H1 (cell line): ENCODE measurements at regions of chr17 and their contacts with region 1.

Region 1: GRCh38 chr17:78840725-78841611 is at the start of gene USP36:
- DNase-seq: peak; percentile 96 to 100
- H3K4me3 ChIP-seq: peak within 1 kb of the TSS; percentile 68 to 93 (median 86)
- H3K27ac ChIP-seq: peak within 1 kb of the TSS; percentile 85
- H3K4me1 ChIP-seq: peaks cover 2 to 12% (median 5%) of the 10 kb centered on the region in 4 experiments
- H3K27me3 ChIP-seq: no peaks in the 10 kb centered on the region
- CTCF ChIP-seq: peak in 2 of 3 experiments; percentile 11; a peak in 2 of 4 replicates
- EP300 ChIP-seq: peak; percentile 11 to 79; a peak in 2 of 3 replicates
- POLR2A ChIP-seq: peak; percentile 83 to 86
- RAD21 ChIP-seq: no peak
- total RNA-seq, gene USP36: 65.8 and 67.7 TPM in 2 replicates

Region 2: DNA sequence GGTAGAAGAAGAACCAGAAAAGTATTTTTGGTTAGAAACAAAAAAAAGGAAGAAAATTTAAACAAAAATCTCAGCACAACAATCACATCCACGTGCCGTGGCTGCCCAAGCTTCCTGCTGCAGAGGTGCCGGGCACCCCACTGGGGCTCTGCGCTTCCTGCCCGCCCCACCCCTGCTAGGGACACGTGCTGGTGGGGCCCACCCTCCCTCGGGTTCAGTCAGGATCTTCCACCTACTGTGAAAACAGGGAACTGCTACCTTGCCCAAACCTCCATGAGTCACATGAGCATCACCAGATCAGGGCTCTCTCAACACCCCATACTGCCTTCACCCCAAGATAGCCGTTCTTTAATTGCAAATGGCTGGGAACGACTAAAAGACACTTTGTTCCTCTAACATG is 34.5 kb before region 1 on chr17:
- CTCF ChIA-PET with region 1: interaction called, 3 read pairs
- POLR2A ChIA-PET with region 1: interaction called, 14 read pairs
- DNase-seq: no peak
- H3K4me3 ChIP-seq: no peak overlapping the region
- H3K27ac ChIP-seq: no peak overlapping the region
- H3K4me1 ChIP-seq: no peaks in the 10 kb centered on the region
- H3K27me3 ChIP-seq: no peaks in the 10 kb centered on the region; a peak in 1 of 7 replicates
- CTCF ChIP-seq: no peak
- EP300 ChIP-seq: no peak
- POLR2A ChIP-seq: no peak
- RAD21 ChIP-seq: no peak

Region 3: DNA sequence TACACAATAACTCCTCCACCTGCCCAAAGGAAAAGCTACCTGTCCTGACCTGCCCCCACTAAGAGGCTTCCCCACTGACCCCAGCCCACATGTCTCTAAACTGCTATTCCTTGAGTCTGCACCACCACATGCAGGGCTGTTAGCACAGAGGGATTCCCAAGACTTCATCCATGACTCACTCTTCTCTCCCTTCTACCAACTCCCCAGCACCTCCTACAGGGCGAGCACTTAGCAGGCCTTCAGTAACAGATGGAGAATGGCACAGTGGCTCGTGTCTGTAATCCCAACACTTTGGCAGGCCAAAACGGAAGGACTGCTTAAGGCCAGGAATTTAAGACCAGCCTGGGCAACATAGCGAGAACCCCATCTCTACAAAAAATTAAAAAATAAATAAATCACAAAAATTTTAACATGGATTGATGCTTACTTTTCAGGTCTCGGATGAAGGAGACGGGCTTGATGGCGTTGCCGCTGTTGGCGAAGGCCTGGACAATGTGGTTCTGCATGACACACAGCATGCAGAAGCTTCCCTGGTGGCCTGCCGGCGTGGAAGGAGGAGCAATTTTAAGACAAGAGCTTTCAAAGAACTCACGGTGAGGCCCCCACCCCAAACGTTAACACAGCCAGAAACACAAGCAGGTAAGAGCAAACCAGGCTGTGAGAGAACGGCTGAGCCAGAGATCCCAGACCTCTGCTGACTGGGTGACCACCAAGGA is 12.3 kb before region 1 on chr17:
- CTCF ChIA-PET with region 1: interaction called, 10 read pairs
- POLR2A ChIA-PET with region 1: interaction called, 9 read pairs
- DNase-seq: no peak
- H3K4me3 ChIP-seq: no peak overlapping the region
- H3K27ac ChIP-seq: no peak overlapping the region
- H3K4me1 ChIP-seq: no peaks in the 10 kb centered on the region
- H3K27me3 ChIP-seq: no peaks in the 10 kb centered on the region
- CTCF ChIP-seq: peak; percentile 29 to 47 (median 39); a peak in 3 of 4 replicates
- EP300 ChIP-seq: no peak
- POLR2A ChIP-seq: no peak
- RAD21 ChIP-seq: peak in 1 of 2 experiments; percentile 28; a peak in 2 of 4 replicates

Region 4: DNA sequence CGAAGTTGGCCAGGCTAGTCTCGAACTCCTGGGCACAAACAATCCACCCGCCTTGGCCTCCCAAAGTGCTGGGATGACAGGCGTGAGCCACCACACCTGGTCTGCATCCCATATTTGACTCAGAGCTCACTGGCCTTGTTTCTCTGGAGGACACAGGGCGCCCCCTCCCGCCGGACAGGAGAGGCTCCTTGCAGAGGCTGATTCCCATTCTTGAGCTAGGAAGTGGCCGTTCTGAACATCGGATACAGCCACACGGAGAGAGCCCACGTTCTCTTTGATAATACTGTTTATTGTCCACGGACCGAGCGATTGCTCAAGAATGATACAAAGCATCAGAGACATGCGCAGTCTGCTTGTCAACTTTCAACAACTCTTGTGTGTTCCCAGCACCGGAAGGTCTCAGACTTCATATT is 11.7 kb after region 1 on chr17:
- CTCF ChIA-PET with region 1: interaction called, 18 read pairs
- POLR2A ChIA-PET with region 1: interaction called, 5 read pairs
- DNase-seq: peak in 1 of 2 experiments; percentile 59
- H3K4me3 ChIP-seq: no peak overlapping the region
- H3K27ac ChIP-seq: no peak overlapping the region
- H3K4me1 ChIP-seq: no peaks in the 10 kb centered on the region; a peak in 1 of 7 replicates
- H3K27me3 ChIP-seq: no peaks in the 10 kb centered on the region
- CTCF ChIP-seq: peak; percentile 42 to 45 (median 44)
- EP300 ChIP-seq: no peak
- POLR2A ChIP-seq: no peak
- RAD21 ChIP-seq: peak in 1 of 2 experiments; percentile 40; a peak in 1 of 4 replicates